ENCODE measurements at regions of chr5 and their contacts with region 1.

Region 1: DNA sequence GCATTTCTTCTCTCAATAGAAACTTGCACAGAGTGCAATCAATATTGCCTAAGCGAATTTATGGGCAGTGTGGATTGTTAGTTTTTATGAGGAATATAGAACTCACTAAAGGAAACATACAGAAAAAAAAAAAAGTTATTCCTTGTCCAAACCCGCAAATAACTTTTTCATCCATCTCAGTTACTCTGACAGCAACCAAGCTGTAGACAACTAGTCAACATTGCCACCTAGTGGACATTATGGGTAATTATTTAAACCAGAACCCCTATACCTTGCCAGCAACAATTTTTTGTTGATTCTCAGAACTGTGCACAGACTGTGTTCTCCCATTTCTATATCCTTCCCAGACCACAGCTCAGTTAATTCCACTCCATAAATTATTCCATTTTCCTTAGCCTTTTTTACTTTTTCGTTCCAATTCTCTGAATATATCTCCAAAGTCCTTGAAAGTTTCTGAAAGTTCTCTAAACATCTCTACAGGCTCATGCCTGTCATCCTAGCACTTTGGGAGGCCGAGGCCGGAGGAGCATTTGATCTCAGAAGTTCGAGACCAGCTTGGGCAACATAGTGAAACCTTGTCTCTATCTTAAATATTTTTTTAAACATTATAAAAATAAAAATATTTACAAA is 2.6 kb upstream of the AFAP1L1 start:
- DNase-seq: peak; percentile 51
- H3K4me3 ChIP-seq: no peak overlapping the region
- H3K27ac ChIP-seq: no peak overlapping the region
- H3K4me1 ChIP-seq: peaks cover 16% of the 10 kb centered on the region
- H3K27me3 ChIP-seq: no peaks in the 10 kb centered on the region
- CTCF ChIP-seq: peak; percentile 57 to 70

Region 2: GRCh38 chr5:148730943-148731861 is 537.8 kb before region 1 on chr5:
- CTCF ChIA-PET with region 1: interaction called, 3 read pairs
- dilution Hi-C with region 1: no loop called
- in situ Hi-C with region 1: loop called (anchors 10 kb)
- intact Hi-C with region 1: loop called (anchors 2 kb)
- DNase-seq: peak; percentile 64
- H3K4me3 ChIP-seq: peak overlapping the region in 1 of 3 experiments; percentile 4
- H3K27ac ChIP-seq: no peak overlapping the region
- H3K4me1 ChIP-seq: peaks cover 6% of the 10 kb centered on the region
- H3K27me3 ChIP-seq: no peaks in the 10 kb centered on the region
- CTCF ChIP-seq: peak; percentile 76 to 98

Region 3: GRCh38 chr5:149035372-149035790 is 233.7 kb before region 1 on chr5:
- CTCF ChIA-PET with region 1: no interaction called
- dilution Hi-C with region 1: no loop called
- in situ Hi-C with region 1: no loop called
- intact Hi-C with region 1: loop called (anchors 1 kb)
- DNase-seq: peak; percentile 61
- H3K4me3 ChIP-seq: no peak overlapping the region
- H3K27ac ChIP-seq: no peak overlapping the region
- H3K4me1 ChIP-seq: peaks cover 25% of the 10 kb centered on the region
- H3K27me3 ChIP-seq: no peaks in the 10 kb centered on the region
- CTCF ChIP-seq: peak; percentile 88 to 90

Region 4: GRCh38 chr5:149094981-149095380 is 174.1 kb before region 1 on chr5:
- CTCF ChIA-PET with region 1: no interaction called
- dilution Hi-C with region 1: no loop called
- in situ Hi-C with region 1: no loop called
- intact Hi-C with region 1: no loop called
- DNase-seq: no peak
- H3K4me3 ChIP-seq: no peak overlapping the region
- H3K27ac ChIP-seq: no peak overlapping the region
- H3K4me1 ChIP-seq: no peaks in the 10 kb centered on the region
- H3K27me3 ChIP-seq: no peaks in the 10 kb centered on the region
- CTCF ChIP-seq: no peak

Region 5: DNA sequence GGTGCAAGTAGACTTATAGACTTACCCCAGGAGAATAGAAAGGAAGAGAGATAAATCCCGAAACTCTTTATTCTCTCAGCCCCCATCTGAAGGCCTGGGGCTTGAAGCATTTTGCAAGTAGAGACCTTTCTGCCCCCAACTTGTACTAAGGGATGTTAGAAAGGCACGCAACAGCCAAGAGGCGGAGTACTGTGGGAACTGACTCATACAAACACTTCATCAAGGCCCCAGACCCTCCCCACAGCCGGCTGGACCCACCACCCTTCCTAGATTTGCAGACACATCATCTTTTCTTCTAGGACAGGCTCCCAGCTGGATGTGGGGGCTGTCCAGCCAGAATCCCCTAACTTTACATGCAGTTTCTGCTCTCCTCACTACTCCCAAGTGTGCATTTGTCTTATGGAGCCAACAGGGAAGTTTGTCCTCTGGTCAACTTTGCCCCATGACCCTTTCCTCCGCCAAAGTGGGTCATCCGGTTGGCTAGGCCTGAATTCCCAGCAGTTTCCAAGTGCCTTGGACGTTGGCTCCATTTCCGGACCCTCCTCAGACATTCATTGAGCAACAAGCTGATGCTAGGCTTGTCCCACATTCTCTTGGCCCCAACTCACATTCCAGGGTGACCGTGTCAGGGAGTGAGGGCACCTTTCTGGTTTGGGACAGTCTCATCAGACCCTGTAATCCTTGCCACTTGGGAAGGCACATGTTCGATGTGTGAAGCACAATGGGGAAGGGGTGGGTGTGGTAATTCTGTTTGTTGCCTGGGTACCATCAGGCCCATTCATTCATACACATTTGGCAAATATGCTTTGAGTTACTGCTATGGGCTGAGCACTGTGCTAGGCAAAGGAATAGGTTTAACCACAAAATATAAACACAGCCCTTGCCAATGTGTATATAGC is 63.2 kb before region 1 on chr5:
- CTCF ChIA-PET with region 1: no interaction called
- dilution Hi-C with region 1: loop called (anchors 5 kb)
- in situ Hi-C with region 1: no loop called
- intact Hi-C with region 1: no loop called
- DNase-seq: no peak
- H3K4me3 ChIP-seq: no peak overlapping the region
- H3K27ac ChIP-seq: no peak overlapping the region
- H3K4me1 ChIP-seq: peaks cover 33% of the 10 kb centered on the region
- H3K27me3 ChIP-seq: no peaks in the 10 kb centered on the region
- CTCF ChIP-seq: no peak

Region 6: DNA sequence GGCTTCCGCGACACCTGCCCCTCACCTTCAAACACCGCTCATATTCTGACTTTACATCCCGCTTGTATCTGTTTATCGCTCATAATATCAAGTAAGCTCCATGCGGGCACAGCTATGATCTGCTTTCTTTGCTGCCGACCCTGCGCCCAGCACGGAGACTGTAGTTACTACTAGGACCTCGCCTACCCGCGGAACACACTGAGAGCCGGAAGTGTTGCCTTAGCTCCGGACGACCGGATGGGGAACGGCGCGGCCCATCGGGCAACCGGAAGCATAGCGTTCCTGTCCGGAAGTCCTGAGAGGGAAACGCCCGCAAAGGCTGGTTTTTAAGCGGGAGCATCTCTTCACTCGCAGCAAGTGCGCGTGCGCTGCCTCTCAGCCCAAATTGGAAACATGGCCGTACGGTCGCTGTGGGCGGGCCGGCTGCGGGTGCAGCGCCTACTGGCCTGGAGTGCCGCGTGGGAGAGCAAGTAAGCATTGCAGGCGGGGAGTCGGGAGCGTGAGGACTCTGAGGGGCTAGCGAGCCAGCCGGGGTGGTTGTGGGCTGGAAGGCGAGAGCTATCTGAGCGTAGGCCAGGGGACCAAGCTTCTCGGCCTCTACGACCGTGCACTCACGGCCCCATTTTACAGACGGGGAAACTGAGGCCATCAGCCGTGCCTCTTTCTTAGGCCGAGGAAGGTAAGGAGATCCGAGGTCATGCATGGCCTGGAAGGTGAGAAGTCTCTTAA is 76.3 kb after region 1 on chr5 and contains the start of gene GRPEL2:
- CTCF ChIA-PET with region 1: no interaction called
- dilution Hi-C with region 1: no loop called
- in situ Hi-C with region 1: no loop called
- intact Hi-C with region 1: loop called (anchors 1 kb)
- DNase-seq: peak; percentile 95
- H3K4me3 ChIP-seq: peak within 1 kb of the TSS; percentile 77 to 99 (median 98)
- H3K27ac ChIP-seq: peak within 1 kb of the TSS; percentile 85
- H3K4me1 ChIP-seq: peaks cover 22% of the 10 kb centered on the region
- H3K27me3 ChIP-seq: no peaks in the 10 kb centered on the region
- CTCF ChIP-seq: no peak
- total RNA-seq, gene GRPEL2: 50.2 to 61.6 TPM

Region 7: DNA sequence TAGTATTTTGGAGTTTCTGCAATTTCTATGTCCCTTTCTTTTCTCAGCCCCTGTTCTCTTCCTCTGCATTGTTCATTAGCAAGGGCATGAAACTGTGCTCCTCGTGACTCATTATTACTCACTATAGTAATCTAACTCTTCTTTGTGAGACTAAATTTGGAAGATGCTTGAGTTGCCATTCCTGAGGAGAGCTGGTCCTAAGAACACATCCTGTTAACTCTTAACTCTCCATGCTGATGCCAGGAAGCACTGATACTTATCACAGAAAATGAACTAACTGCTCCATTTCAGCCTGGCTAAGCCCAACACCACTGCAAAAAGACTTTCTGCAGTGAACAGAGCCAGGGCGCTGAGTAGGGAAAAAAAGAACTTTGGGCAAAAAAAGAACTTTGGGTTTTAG is 292.8 kb after region 1 on chr5:
- CTCF ChIA-PET with region 1: no interaction called
- dilution Hi-C with region 1: no loop called
- in situ Hi-C with region 1: no loop called
- intact Hi-C with region 1: loop called (anchors 2 kb)
- DNase-seq: peak; percentile 92
- H3K4me3 ChIP-seq: peak overlapping the region in 2 of 3 experiments; percentile 36 to 38
- H3K27ac ChIP-seq: peak overlapping the region; percentile 89
- H3K4me1 ChIP-seq: peaks cover 36% of the 10 kb centered on the region
- H3K27me3 ChIP-seq: no peaks in the 10 kb centered on the region
- CTCF ChIP-seq: no peak